Breast epithelium (tissue), 4 donors: ENCODE measurements at regions of chr2 and their contacts with region 1.

Region 1: DNA sequence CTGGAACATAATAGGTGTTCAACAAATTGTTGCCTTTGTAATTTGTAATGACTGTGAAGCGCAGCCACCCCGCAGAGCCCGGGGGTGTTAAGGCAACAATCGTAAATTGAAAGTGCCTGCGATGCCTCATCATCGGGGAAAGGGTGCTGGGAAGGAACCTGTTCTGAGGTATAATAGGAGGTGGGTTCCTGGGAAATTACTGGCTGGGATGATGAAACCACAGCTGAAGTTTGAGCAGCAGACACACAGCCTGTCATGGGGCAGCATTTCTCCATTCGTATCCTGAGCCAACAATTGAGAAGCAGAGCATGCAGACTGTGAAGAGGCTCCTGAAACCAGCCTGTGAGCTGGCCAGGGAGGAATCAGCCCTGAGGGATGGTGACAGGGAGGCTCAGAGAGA is 404.0 kb upstream of the MYT1L start:
- DNase-seq: no peak
- H3K4me3 ChIP-seq: no peak overlapping the region
- H3K27ac ChIP-seq: no peak overlapping the region
- H3K4me1 ChIP-seq: no peaks in the 10 kb centered on the region
- H3K27me3 ChIP-seq: peaks cover 0 to 3% of the 10 kb centered on the region in 2 donors
- CTCF ChIP-seq: no peak
- POLR2A ChIP-seq: no peak

Region 2: DNA sequence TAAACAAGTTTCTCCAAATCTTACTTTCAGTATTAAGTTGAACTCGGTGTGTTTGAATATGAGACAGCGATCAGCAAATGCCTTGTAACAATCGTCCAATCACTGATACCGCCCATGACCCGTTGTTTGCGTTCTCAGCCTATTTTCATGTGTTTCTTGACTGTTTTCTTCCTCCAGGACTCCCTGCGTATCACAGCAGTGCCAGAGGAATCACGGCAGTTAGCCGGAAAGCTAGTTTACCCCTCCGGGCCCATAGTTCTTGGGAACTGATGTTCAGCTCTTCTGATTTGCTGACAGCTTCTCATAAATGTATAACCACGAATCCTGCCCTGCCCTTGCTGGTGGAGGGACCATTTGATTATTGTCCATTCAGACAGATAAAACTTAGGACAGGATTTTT is 1364.0 kb before region 1 on chr2:
- intact Hi-C with region 1: loop called (anchors 10 kb)
- DNase-seq: no peak
- H3K4me3 ChIP-seq: no peak overlapping the region
- H3K27ac ChIP-seq: peak overlapping the region; percentile 46 to 72
- H3K4me1 ChIP-seq: no peaks in the 10 kb centered on the region
- H3K27me3 ChIP-seq: no peaks in the 10 kb centered on the region
- CTCF ChIP-seq: no peak
- POLR2A ChIP-seq: no peak

Region 3: DNA sequence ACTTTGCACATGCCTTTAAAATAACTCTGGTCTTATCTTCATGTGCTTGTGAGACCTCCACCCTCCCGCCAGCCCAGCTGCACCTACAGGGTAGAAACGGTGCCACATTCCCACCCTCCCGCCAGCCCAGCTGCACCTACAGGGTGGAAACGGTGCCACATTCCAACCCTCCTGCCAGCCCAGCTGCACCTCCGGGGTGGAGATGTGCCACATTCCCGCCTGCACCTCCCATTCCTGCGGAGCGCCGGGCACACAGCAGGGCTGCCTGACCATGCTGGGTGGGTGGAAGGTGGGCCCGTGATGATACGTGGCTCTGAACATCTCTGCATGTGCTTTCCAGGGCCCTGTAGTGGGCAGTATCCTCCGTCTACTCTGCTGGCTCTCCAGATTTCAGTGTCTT is 747.0 kb before region 1 on chr2:
- intact Hi-C with region 1: no loop called
- DNase-seq: no peak
- H3K4me3 ChIP-seq: no peak overlapping the region
- H3K27ac ChIP-seq: no peak overlapping the region
- H3K4me1 ChIP-seq: no peaks in the 10 kb centered on the region
- H3K27me3 ChIP-seq: peaks cover 0 to 31% of the 10 kb centered on the region in 2 donors
- CTCF ChIP-seq: no peak
- POLR2A ChIP-seq: no peak

Region 4: GRCh38 chr2:2757764-2758163 is 22.7 kb after region 1 on chr2:
- intact Hi-C with region 1: no loop called
- DNase-seq: no peak
- H3K4me3 ChIP-seq: no peak overlapping the region
- H3K27ac ChIP-seq: no peak overlapping the region
- H3K4me1 ChIP-seq: no peaks in the 10 kb centered on the region
- H3K27me3 ChIP-seq: no peaks in the 10 kb centered on the region
- CTCF ChIP-seq: no peak
- POLR2A ChIP-seq: no peak

Region 5: GRCh38 chr2:2769481-2770431 is 34.7 kb after region 1 on chr2:
- intact Hi-C with region 1: loop called (anchors 1 kb)
- DNase-seq: peak in 1 of 2 donors; percentile 41
- H3K4me3 ChIP-seq: peak overlapping the region in 1 of 3 donors; percentile 2
- H3K27ac ChIP-seq: no peak overlapping the region
- H3K4me1 ChIP-seq: no peaks in the 10 kb centered on the region
- H3K27me3 ChIP-seq: no peaks in the 10 kb centered on the region
- CTCF ChIP-seq: peak in 1 of 3 donors; percentile 8
- POLR2A ChIP-seq: no peak